Astrocyte of the cerebellum (primary cell): ENCODE measurements at regions of chr2 and their contacts with region 1.

Region 1: GRCh38 chr2:106638043-106638442 is 150.9 kb downstream of the CD8B2 start:
- DNase-seq: no peak
- H3K4me3 ChIP-seq: no peak overlapping the region
- CTCF ChIP-seq: no peak

Region 2: DNA sequence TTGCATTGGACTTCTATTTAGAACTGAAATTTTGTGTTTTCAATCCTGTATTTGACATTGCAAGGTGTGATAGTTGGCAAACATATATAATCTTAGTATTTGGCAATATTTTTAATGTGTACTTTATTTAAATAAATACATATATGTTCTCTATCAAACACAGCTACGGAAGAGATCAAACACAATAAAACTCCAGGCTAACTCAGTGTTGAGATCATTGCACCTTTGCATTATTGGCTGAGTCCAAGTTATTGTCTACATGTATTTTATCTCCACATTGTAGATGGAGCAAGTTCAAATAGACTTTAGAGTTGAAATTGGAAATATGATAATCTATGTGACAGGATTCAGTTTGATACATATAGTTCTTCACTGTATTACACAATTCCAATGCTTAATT is 71.2 kb after region 1 on chr2:
- in situ Hi-C with region 1: no loop called
- DNase-seq: no peak
- H3K4me3 ChIP-seq: no peak overlapping the region
- CTCF ChIP-seq: no peak

Region 3: GRCh38 chr2:107936433-107937359 is 1298.7 kb after region 1 on chr2:
- in situ Hi-C with region 1: loop called (anchors 25 kb)
- DNase-seq: no peak
- H3K4me3 ChIP-seq: no peak overlapping the region
- CTCF ChIP-seq: no peak